A673 (cell line): ENCODE measurements at regions of chr3 and their contacts with region 1.

Region 1: GRCh38 chr3:149480325-149481017 is 6.0 kb downstream of the TM4SF4 start:
- DNase-seq: peak; percentile 67
- H3K4me3 ChIP-seq: no peak overlapping the region
- H3K27ac ChIP-seq: no peak overlapping the region
- H3K4me1 ChIP-seq: no peaks in the 10 kb centered on the region
- H3K27me3 ChIP-seq: no peaks in the 10 kb centered on the region
- CTCF ChIP-seq: peak; percentile 89

Region 2: DNA sequence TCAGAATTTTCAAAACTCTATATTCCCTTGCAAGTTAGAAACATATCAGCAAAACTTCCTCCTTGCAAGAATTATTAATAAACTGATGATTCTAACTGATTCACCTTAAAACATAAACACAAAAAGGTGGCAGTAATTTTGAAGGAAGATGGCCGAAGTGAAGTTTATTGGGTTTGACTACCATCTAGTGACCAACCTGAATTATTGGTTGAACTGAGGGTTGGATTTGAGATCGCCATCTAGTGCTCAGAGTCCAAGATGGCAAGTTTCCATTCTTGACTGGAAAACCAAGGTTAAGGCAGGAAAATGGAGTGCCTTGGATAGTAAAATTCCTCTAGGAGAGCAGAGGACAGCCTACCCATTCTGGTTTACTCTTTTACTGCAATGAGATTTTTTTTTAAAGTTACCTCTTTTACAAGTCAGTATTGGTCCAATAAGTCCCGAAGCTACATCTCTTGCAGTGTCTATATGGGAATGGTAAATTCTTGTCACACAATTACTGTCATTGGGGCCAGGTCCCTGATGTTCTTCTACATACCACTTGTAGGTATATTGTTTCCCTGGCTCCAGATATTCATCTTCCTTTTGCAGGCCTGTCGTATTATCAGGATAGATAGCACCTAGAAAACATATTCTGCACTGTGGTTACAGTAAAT is 207.2 kb before region 1 on chr3:
- CTCF ChIA-PET with region 1: no interaction called
- POLR2A ChIA-PET with region 1: no interaction called
- intact Hi-C with region 1: loop called (anchors 10 kb)
- DNase-seq: peak; percentile 83
- H3K4me3 ChIP-seq: no peak overlapping the region
- H3K27ac ChIP-seq: no peak overlapping the region
- H3K4me1 ChIP-seq: no peaks in the 10 kb centered on the region
- H3K27me3 ChIP-seq: no peaks in the 10 kb centered on the region
- CTCF ChIP-seq: peak; percentile 98

Region 3: GRCh38 chr3:149352556-149352955 is 127.9 kb before region 1 on chr3:
- CTCF ChIA-PET with region 1: interaction called, 3 read pairs
- POLR2A ChIA-PET with region 1: no interaction called
- intact Hi-C with region 1: loop called (anchors 1 kb)
- DNase-seq: peak; percentile 68
- H3K4me3 ChIP-seq: no peak overlapping the region
- H3K27ac ChIP-seq: no peak overlapping the region
- H3K4me1 ChIP-seq: no peaks in the 10 kb centered on the region
- H3K27me3 ChIP-seq: no peaks in the 10 kb centered on the region
- CTCF ChIP-seq: peak; percentile 79

Region 4: GRCh38 chr3:149393345-149394160 is 86.9 kb before region 1 on chr3:
- CTCF ChIA-PET with region 1: no interaction called
- POLR2A ChIA-PET with region 1: no interaction called
- intact Hi-C with region 1: loop called (anchors 1 kb)
- DNase-seq: peak; percentile 82
- H3K4me3 ChIP-seq: no peak overlapping the region
- H3K27ac ChIP-seq: no peak overlapping the region
- H3K4me1 ChIP-seq: peaks cover 5% of the 10 kb centered on the region
- H3K27me3 ChIP-seq: no peaks in the 10 kb centered on the region
- CTCF ChIP-seq: peak; percentile 92